ENCODE measurements at regions of chr16 and their contacts with region 1.

Region 1: DNA sequence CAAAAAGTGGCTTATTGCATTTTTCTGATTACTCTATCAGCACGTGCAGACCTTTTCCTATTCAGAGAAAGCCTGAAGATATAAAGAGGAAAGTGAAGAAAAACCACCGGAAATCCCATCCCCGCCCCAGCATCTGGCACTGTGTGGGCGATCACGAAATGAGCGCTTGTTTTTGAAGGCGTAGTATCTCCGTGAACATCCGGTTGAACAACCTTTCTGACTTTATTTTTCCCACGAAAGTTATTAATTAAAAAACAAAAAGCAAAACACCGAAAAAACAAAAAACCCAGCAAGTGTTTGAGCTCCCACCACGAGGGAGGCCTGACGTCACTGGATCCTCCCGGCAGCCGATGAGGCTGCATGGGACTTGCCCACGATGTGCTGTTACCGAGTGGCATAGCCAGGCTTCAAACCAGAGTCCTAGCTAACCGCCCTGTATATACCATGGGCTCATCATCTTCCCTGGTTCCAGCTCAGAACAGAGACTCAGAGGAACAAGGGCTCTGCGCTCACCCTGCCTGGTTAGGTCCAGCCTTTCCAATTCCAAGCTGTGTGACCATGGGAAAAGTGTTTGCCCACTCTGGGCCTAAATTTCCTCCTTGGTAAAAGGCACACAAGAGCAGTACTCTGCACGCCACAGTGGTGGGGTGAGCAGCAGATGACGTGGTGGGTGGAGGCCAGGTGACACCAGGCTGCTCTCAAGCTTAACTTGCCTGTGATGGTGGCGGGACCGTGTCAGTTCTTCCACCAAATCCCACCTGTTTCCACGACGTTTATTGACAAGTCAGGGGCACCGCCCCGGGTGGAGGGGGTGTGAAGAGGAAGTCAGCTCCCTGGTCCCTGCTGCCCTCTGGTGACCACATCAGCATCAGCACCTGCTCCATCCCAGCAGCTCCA is 34.3 kb upstream of the IL21R start:
- DNase-seq: peak; percentile 62 to 97 (median 93)
- ATAC-seq: peak; percentile 77 to 85 (median 79)
- H3K4me3 ChIP-seq: peak overlapping the region; percentile 0 to 23
- H3K4me3 Mint-ChIP-seq: peak overlapping the region; percentile 51 to 66 (median 57)
- H3K27ac ChIP-seq: peak overlapping the region; percentile 100
- H3K27ac Mint-ChIP-seq: peak overlapping the region; percentile 94 to 95
- H3K4me1 ChIP-seq: peaks cover 27 to 70% of the 10 kb centered on the region in 2 experiments
- H3K4me1 Mint-ChIP-seq: peaks cover 59 to 76% (median 66%) of the 10 kb centered on the region in 3 donors
- H3K27me3 ChIP-seq: no peaks in the 10 kb centered on the region
- H3K27me3 Mint-ChIP-seq: no peaks in the 10 kb centered on the region

Region 2: GRCh38 chr16:26475596-26475995 is 892.1 kb before region 1 on chr16:
- CTCF ChIA-PET with region 1: no interaction called
- POLR2A ChIA-PET with region 1: no interaction called
- DNase-seq: no peak
- ATAC-seq: no peak
- H3K4me3 ChIP-seq: no peak overlapping the region
- H3K4me3 Mint-ChIP-seq: no peak overlapping the region
- H3K27ac ChIP-seq: no peak overlapping the region
- H3K27ac Mint-ChIP-seq: no peak overlapping the region
- H3K4me1 ChIP-seq: no peaks in the 10 kb centered on the region
- H3K4me1 Mint-ChIP-seq: no peaks in the 10 kb centered on the region
- H3K27me3 ChIP-seq: no peaks in the 10 kb centered on the region
- H3K27me3 Mint-ChIP-seq: peaks cover 4 to 10% of the 10 kb centered on the region in 2 donors

Region 3: DNA sequence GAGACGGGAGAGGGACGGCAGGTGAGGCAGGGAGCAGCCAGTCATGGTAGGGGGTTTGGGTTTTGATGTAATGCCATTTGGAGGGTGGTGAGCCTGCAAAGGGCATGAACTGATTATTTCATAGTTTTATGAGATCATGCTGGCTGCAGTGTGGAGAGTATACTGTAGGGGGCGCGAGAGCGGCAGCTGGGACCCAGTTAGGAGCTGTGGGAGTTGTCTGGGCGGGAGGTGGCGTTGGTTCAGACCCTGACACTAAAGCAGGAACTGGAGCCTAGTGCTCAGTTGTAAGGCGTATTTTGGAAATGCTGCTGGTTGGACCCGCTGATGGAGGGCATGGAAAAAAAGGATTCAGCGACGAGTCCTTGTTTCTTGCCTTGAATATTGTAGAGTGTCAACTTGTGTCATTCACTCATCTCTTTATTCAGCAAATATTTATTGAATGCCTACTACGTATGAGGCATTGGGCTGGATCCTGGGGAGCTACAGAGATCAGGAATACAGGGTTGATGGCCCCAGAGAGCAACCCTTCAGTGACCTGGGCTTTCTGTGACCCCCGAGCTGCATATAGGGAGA is 188.1 kb before region 1 on chr16:
- CTCF ChIA-PET with region 1: interaction called in 1 of 2 experiments, 25 read pairs
- POLR2A ChIA-PET with region 1: no interaction called
- DNase-seq: peak; percentile 72 to 92 (median 85)
- ATAC-seq: peak; percentile 94 to 98 (median 96)
- H3K4me3 ChIP-seq: no peak overlapping the region
- H3K4me3 Mint-ChIP-seq: peak overlapping the region in 1 of 3 donors; percentile 24
- H3K27ac ChIP-seq: no peak overlapping the region
- H3K27ac Mint-ChIP-seq: peak overlapping the region; percentile 74 to 88
- H3K4me1 ChIP-seq: peaks cover 17 to 27% of the 10 kb centered on the region in 2 experiments
- H3K4me1 Mint-ChIP-seq: peaks cover 30 to 50% (median 33%) of the 10 kb centered on the region in 3 donors
- H3K27me3 ChIP-seq: no peaks in the 10 kb centered on the region
- H3K27me3 Mint-ChIP-seq: no peaks in the 10 kb centered on the region

Region 4: DNA sequence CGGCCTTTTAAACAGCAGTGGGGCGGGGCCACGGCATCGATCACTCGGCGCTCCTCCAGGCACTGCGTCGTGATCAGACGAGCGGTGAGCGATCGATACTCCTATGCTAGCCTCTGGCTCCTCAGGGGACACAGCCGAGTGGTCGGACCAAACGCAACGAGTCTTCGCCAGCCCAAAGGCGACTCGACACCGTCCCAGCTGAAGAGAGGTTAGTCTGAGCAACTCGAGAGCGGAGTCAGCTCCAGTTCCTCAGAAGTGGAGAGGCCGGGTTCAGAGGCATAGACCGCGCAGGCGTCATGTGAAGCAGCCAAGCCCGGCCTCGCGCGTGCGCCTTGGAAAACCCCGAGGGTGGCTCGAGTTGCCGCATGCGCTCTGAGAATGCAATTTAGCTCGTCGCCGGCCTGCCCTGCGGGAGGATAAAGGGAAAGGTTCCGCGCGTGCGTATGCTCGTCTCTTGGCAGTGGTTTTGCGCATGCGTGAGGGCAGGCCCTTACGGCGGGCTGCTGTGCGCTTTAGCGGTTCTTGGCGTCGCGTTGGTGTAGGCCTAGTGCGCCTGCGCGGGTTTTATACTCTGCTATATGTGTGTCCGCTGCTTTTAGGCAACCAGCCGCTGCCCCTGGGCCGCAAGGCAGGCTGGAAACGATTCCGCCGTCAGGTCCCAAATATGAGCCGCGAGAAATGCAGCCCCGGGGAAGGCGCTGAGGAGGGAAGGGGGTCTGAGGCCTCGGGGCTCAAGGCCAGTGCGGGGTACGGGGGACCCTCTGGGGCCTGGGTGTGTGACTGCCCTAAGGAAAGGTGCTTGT is 164.1 kb before region 1 on chr16 and contains the start of gene KDM8:
- CTCF ChIA-PET with region 1: interaction called in 1 of 2 experiments, 13 read pairs
- POLR2A ChIA-PET with region 1: interaction called, 3 to 4 read pairs
- DNase-seq: peak; percentile 98 to 100 (median 100)
- ATAC-seq: peak; percentile 77 to 82 (median 82)
- H3K4me3 ChIP-seq: peak within 1 kb of the TSS; percentile 76 to 83
- H3K4me3 Mint-ChIP-seq: peak within 1 kb of the TSS; percentile 85 to 97 (median 96)
- H3K27ac ChIP-seq: peak within 1 kb of the TSS; percentile 97
- H3K27ac Mint-ChIP-seq: peak within 1 kb of the TSS; percentile 100
- H3K4me1 ChIP-seq: peaks cover 37 to 53% of the 10 kb centered on the region in 2 experiments
- H3K4me1 Mint-ChIP-seq: peaks cover 51 to 62% (median 53%) of the 10 kb centered on the region in 3 donors
- H3K27me3 ChIP-seq: no peaks in the 10 kb centered on the region
- H3K27me3 Mint-ChIP-seq: no peaks in the 10 kb centered on the region
- total RNA-seq, gene KDM8: 13.4 to 25.6 (median 23.5) TPM

Region 5: DNA sequence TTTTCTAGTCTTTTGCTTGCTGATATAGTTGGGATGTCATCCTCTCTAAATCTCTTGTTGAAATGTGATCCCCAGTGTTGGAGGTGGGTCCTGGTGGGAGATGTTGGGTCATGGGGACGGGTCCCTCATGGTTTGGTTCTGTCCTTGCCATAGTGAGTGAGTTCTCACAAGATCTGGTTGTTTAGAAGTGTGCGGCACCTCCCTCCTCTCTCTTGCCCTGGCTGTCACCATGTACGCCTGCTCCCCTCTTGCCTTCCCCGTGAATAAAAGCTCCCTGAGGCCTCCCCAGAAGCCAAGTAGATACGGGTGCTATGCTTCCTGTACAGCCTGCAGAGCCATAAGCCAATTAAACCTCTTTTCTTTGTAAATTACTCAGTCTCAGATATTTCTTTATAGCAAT is 38.8 kb before region 1 on chr16:
- CTCF ChIA-PET with region 1: no interaction called
- POLR2A ChIA-PET with region 1: no interaction called
- DNase-seq: peak in 1 of 35 experiments; percentile 7
- ATAC-seq: no peak
- H3K4me3 ChIP-seq: no peak overlapping the region
- H3K4me3 Mint-ChIP-seq: peak overlapping the region in 1 of 3 donors; percentile 47
- H3K27ac ChIP-seq: no peak overlapping the region
- H3K27ac Mint-ChIP-seq: peak overlapping the region; percentile 93
- H3K4me1 ChIP-seq: peaks cover 4 to 62% of the 10 kb centered on the region in 2 experiments
- H3K4me1 Mint-ChIP-seq: peaks cover 77 to 89% (median 78%) of the 10 kb centered on the region in 3 donors
- H3K27me3 ChIP-seq: no peaks in the 10 kb centered on the region
- H3K27me3 Mint-ChIP-seq: no peaks in the 10 kb centered on the region

Region 6: DNA sequence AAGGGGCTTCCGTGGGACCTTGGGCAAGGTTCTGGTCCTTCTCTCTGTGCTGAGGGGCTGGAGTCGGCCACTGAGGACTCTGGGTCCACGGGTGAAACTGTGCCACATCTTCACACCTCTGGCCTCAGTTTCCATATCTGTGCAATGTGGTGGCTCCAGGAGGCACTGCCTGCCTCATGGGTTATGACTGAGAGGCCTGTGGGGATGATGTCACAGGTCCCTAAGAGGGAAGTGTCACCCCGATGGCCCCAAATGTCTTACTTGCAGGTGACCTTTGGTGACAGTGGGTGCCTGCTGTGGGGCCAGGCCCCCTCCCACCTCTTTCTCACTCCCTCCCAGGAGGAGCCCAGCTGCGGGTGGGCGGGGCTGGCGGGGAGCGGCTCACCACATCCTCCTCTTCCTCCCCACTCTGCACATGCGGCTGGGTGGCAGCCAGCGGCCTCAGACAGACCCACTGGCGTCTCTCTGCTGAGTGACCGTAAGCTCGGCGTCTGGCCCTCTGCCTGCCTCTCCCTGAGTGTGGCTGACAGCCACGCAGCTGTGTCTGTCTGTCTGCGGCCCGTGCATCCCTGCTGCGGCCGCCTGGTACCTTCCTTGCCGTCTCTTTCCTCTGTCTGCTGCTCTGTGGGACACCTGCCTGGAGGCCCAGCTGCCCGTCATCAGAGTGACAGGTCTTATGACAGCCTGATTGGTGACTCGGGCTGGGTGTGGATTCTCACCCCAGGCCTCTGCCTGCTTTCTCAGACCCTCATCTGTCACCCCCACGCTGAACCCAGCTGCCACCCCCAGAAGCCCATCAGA is 34.3 kb after region 1 on chr16 and contains the start of gene IL21R:
- CTCF ChIA-PET with region 1: interaction called in 1 of 2 experiments, 17 read pairs
- POLR2A ChIA-PET with region 1: interaction called, 9 to 25 read pairs
- DNase-seq: peak; percentile 76 to 95 (median 89)
- ATAC-seq: peak; percentile 82 to 89 (median 86)
- H3K4me3 ChIP-seq: peak within 1 kb of the TSS; percentile 90 to 98
- H3K4me3 Mint-ChIP-seq: peak within 1 kb of the TSS; percentile 88 to 99 (median 92)
- H3K27ac ChIP-seq: peak within 1 kb of the TSS; percentile 83
- H3K27ac Mint-ChIP-seq: peak within 1 kb of the TSS; percentile 96 to 97
- H3K4me1 ChIP-seq: peaks cover 21 to 63% of the 10 kb centered on the region in 2 experiments
- H3K4me1 Mint-ChIP-seq: peaks cover 59 to 77% (median 74%) of the 10 kb centered on the region in 3 donors
- H3K27me3 ChIP-seq: no peaks in the 10 kb centered on the region
- H3K27me3 Mint-ChIP-seq: no peaks in the 10 kb centered on the region
- total RNA-seq, gene IL21R: 35.6 to 44.3 (median 38.2) TPM

Region 7: GRCh38 chr16:27408012-27408601 is 40.4 kb after region 1 on chr16:
- CTCF ChIA-PET with region 1: interaction called in 1 of 2 experiments, 17 read pairs
- POLR2A ChIA-PET with region 1: interaction called, 9 to 25 read pairs
- DNase-seq: peak in 2 of 35 experiments; percentile 34 to 53
- ATAC-seq: peak; percentile 36 to 57 (median 48)
- H3K4me3 ChIP-seq: peak overlapping the region in 1 of 2 donors; percentile 5
- H3K4me3 Mint-ChIP-seq: peak overlapping the region; percentile 58 to 92 (median 88)
- H3K27ac ChIP-seq: peak overlapping the region; percentile 73
- H3K27ac Mint-ChIP-seq: peak overlapping the region; percentile 87 to 93
- H3K4me1 ChIP-seq: peaks cover 27 to 60% of the 10 kb centered on the region in 2 experiments
- H3K4me1 Mint-ChIP-seq: peaks cover 88 to 93% (median 91%) of the 10 kb centered on the region in 3 donors
- H3K27me3 ChIP-seq: no peaks in the 10 kb centered on the region
- H3K27me3 Mint-ChIP-seq: no peaks in the 10 kb centered on the region

Measured in T-cell (primary cell).